IMR-90 (cell line): ENCODE measurements at regions of chr4 and their contacts with region 1.

Region 1: DNA sequence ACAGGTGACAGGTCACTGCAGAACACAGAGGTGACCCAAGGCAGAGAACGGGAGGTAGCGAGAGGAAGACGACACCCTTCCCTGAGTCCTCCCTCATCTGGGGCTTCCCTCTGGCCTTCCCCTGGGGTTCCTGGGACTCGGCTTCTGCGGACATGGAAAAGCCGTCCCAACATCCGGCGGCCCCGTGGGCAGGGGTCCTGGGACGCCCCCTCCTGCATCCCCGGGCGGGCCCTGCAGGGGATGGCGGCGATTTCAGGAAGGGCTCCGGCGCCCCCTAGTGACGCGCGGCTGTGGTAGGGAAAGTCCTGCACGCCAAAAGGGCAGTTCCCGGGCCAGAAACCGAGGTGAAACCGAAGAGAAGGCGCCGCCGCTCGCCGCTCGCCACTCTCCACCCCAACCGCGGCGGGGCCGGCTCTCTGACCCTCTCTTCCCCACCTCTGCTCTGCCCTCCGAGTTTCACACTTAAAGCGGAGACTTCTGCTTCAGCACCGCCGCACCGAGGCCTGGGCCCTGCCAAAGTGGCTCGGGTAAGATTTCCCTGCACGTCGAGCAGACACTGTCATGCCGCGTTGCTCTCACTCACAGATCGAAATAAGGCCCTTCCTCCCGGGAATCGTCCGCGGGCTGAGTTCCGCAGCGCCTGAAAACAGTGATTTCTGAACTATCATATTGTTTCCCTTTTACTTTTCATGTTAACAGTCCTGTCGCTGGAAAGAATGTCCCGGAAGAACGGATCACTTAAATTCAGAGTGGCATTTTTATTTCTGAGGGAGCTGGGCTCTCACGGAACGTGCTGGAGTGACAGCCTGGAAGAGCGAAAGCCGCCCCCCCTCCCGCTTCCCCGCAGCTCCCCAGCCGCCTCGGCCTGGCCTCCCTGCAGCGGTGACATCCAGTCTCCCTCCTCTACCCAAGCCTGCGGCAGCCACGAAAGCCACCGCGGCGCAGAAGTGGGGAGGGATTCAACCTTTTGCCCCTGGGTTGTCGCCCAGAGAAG is 110.6 kb downstream of the DCTD start:
- DNase-seq: peak; percentile 59
- ATAC-seq: peak; percentile 97
- H3K4me3 ChIP-seq: peak overlapping the region; percentile 46
- H3K27ac ChIP-seq: peak overlapping the region; percentile 53
- H3K4me1 ChIP-seq: no peaks in the 10 kb centered on the region
- H3K27me3 ChIP-seq: no peaks in the 10 kb centered on the region
- CTCF ChIP-seq: peak; percentile 95
- POLR2A ChIP-seq: 0 out of 2 replicates have a peak, but pooled peaks have one; percentile 47
- RAD21 ChIP-seq: peak; percentile 89

Region 2: GRCh38 chr4:181569553-181569952 is 1237.0 kb before region 1 on chr4:
- CTCF ChIA-PET with region 1: no interaction called
- POLR2A ChIA-PET with region 1: no interaction called
- dilution Hi-C with region 1: no loop called
- in situ Hi-C with region 1: loop called (anchors 25 kb)
- intact Hi-C with region 1: loop called (anchors 5 kb)
- DNase-seq: peak; percentile 65
- ATAC-seq: peak; percentile 92
- H3K4me3 ChIP-seq: no peak overlapping the region
- H3K27ac ChIP-seq: no peak overlapping the region
- H3K4me1 ChIP-seq: peaks cover 2% of the 10 kb centered on the region; the same call in 1 of the 2 replicates
- H3K27me3 ChIP-seq: no peaks in the 10 kb centered on the region
- CTCF ChIP-seq: peak; percentile 69
- POLR2A ChIP-seq: no peak
- RAD21 ChIP-seq: peak; percentile 79

Region 3: DNA sequence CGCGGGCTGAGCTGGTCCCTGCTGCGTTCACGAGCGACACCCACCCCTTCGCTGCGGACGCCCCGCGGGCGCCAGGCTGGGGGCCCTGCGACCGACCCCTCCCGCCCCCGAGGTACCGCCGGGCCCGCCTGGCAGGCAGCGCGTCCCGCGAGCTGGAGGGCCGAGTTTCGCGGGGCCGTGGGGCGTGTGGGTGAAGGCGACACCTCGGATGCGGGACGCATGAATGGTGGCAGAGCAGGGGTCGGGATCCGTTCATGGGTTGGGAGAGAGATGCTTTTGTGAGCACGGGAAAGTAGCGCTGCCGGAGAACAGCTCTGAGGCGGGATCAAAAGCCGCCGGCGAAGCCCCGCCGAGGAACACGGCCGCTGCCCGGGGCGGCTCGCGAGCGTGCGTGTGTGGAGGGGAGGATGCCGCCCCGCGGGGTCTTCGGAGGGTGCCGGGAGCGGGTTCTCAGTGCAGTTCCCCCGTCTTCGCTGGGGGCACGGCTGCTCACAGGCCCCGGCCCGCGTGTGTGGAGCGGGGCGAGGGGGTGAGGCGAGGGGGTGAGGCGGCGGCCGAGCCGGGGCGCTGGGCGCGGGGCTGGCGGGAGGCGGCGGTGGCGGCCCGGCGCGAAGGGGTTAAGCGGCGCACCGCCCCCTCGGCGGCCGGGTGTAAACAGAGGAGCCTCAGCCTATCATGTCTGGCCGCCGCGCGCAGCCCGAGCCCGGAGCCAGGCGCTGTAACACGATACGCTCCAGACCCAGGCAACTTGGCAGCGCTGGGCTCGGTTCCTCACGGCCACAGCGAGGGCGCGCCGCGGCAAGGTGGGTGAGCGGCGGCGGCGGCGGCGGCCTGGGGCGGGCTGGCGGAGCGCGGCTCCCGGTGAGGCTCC is 358.0 kb before region 1 on chr4:
- CTCF ChIA-PET with region 1: no interaction called
- POLR2A ChIA-PET with region 1: no interaction called
- dilution Hi-C with region 1: no loop called
- in situ Hi-C with region 1: no loop called
- intact Hi-C with region 1: loop called (anchors 2 kb)
- DNase-seq: peak; percentile 93
- ATAC-seq: peak; percentile 98
- H3K4me3 ChIP-seq: peak overlapping the region; percentile 62
- H3K27ac ChIP-seq: peak overlapping the region; percentile 50
- H3K4me1 ChIP-seq: no peaks in the 10 kb centered on the region
- H3K27me3 ChIP-seq: no peaks in the 10 kb centered on the region
- CTCF ChIP-seq: no peak
- POLR2A ChIP-seq: peak; percentile 61; the same call in 1 of the 2 replicates
- RAD21 ChIP-seq: 0 out of 2 replicates have a peak, but pooled peaks have one; percentile 13

Region 4: DNA sequence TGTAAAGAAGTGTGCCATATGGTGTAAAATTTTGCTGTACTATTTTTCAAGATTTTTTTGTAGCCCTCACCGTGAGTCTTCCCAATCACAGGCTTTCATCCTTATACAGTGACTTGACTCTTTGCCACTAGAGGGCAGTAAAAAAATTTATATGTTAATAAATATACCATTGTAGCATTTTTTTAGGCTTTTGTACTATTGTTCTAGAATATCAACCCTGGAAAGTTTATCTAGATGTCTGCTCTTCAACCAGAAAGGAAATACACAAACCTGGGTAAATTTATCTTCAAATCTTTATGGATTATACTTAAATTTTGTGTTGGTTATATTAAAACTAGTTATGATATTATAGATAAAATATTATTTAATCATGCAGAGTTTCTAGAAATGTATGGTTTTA is 328.1 kb before region 1 on chr4:
- CTCF ChIA-PET with region 1: no interaction called
- POLR2A ChIA-PET with region 1: no interaction called
- dilution Hi-C with region 1: no loop called
- in situ Hi-C with region 1: no loop called
- intact Hi-C with region 1: loop called (anchors 1 kb)
- DNase-seq: peak; percentile 59
- ATAC-seq: peak; percentile 78
- H3K4me3 ChIP-seq: no peak overlapping the region
- H3K27ac ChIP-seq: no peak overlapping the region
- H3K4me1 ChIP-seq: no peaks in the 10 kb centered on the region
- H3K27me3 ChIP-seq: no peaks in the 10 kb centered on the region
- CTCF ChIP-seq: peak; percentile 58
- POLR2A ChIP-seq: no peak
- RAD21 ChIP-seq: peak; percentile 49

Region 5: GRCh38 chr4:182904211-182904761 is 97.7 kb after region 1 on chr4:
- CTCF ChIA-PET with region 1: no interaction called
- POLR2A ChIA-PET with region 1: no interaction called
- dilution Hi-C with region 1: no loop called
- in situ Hi-C with region 1: no loop called
- intact Hi-C with region 1: no loop called
- DNase-seq: no peak
- ATAC-seq: no peak
- H3K4me3 ChIP-seq: no peak overlapping the region
- H3K27ac ChIP-seq: no peak overlapping the region
- H3K4me1 ChIP-seq: peaks cover 8% of the 10 kb centered on the region
- H3K27me3 ChIP-seq: no peaks in the 10 kb centered on the region
- CTCF ChIP-seq: no peak
- POLR2A ChIP-seq: no peak
- RAD21 ChIP-seq: no peak

Region 6: DNA sequence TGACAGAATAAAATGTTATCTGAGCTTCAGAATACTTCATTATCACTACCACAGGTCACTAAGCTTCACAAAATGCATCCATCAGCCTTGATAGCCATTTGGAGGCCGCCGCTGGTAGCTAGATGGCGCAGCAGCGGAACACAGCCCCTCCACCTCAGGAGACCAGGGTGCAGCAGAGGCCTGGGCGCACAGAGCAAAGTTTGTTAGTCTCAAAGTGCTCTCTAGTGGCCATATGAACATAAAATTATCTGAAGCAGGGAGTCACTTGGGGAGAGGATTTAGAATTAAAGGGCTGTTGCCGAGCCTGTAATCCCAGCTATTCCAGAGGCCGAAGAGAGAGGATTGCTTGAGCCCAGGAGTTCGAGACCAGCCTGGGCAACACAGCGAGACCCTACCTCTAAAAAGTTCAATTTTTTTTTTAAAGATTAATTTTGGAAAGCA is 118.8 kb after region 1 on chr4:
- CTCF ChIA-PET with region 1: no interaction called
- POLR2A ChIA-PET with region 1: no interaction called
- dilution Hi-C with region 1: no loop called
- in situ Hi-C with region 1: no loop called
- intact Hi-C with region 1: loop called (anchors 2 kb)
- DNase-seq: peak; percentile 84
- ATAC-seq: peak; percentile 32
- H3K4me3 ChIP-seq: no peak overlapping the region
- H3K27ac ChIP-seq: no peak overlapping the region
- H3K4me1 ChIP-seq: peaks cover 17% of the 10 kb centered on the region
- H3K27me3 ChIP-seq: no peaks in the 10 kb centered on the region
- CTCF ChIP-seq: peak; percentile 67
- POLR2A ChIP-seq: no peak
- RAD21 ChIP-seq: peak; percentile 67